PC-3 (cell line): ENCODE measurements at regions of chr12 and their contacts with region 1.

Region 1: DNA sequence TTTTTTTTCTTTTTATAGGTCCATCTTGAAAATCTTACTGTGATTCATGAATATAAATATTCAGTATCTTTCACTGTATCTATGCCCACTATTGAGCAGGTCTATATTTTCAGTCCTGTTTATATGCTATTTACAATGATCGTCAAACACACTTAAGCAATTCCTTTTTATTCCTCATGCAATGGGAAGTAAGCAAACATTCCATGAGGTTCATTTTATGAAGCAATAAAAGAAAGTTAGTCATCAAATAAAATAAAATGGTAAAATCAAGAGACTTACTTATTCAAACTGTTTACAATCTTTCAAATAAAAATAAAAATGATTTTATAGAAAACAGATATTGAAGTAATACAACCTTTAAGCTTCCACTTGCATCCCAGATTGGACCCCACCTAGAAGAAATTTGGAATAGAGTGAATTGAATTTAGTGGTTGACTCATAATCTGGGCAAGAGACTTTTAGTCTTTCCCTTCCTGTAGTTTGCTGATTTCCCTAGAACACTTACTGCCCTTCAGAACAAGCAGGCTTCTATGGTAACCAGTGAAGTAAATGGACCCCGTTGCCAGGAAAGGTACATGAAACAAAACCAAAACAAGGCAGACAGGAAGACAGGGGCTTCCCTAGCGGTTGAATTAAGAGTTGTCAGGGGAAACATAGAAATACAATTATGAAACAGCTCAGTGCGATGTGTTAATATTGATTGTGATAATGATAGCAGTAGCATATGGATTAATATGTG is 241.0 kb upstream of the ATP2B1 start:
- DNase-seq: peak; percentile 94
- ATAC-seq: peak; percentile 63
- H3K4me3 ChIP-seq: peak overlapping the region; percentile 27; the same call in 1 of the 2 replicates
- H3K27ac ChIP-seq: peak overlapping the region; percentile 96
- H3K4me1 ChIP-seq: peaks cover 58% of the 10 kb centered on the region
- H3K27me3 ChIP-seq: no peaks in the 10 kb centered on the region
- CTCF ChIP-seq: peak; percentile 60

Region 2: DNA sequence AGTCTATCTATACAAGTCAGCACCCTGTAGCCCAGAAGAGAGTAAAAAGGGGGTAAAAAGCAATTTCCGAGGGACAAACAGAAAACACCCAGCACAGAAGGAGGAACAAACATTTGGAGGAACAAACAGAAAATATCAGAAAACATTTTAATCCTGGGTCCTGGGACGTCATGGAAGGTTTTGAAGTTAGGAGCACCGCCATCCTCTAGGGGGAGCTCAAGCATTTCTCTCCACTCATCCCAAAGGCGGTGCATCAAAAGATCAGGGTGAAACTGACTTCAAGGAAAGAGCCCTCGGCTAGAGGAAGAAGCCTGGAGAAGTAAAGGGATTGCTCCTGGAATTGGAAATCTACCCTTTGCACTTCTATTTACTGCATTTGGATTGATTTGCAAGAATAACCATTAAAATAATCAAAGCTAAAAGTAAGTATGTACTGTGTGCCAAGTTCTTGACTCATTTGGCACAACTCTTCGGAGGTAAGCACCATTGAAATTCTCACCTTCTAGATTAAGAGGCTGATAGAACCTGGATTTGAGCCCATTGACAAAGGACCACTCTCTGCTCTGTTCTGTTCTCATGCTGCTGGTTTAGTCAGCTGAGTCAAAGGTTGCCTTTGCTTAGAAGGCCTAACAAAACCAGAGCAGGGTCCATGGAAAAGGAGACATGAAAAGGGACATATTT is 406.6 kb before region 1 on chr12:
- CTCF ChIA-PET with region 1: no interaction called
- POLR2A ChIA-PET with region 1: no interaction called
- intact Hi-C with region 1: loop called (anchors 2 kb)
- DNase-seq: peak; percentile 91
- ATAC-seq: peak; percentile 94
- H3K4me3 ChIP-seq: no peak overlapping the region
- H3K27ac ChIP-seq: peak overlapping the region; percentile 7
- H3K4me1 ChIP-seq: peaks cover 6% of the 10 kb centered on the region
- H3K27me3 ChIP-seq: no peaks in the 10 kb centered on the region
- CTCF ChIP-seq: peak; percentile 96

Region 3: GRCh38 chr12:89733579-89734201 is 215.9 kb before region 1 on chr12:
- CTCF ChIA-PET with region 1: no interaction called
- POLR2A ChIA-PET with region 1: no interaction called
- intact Hi-C with region 1: loop called (anchors 1 kb)
- DNase-seq: peak; percentile 93
- ATAC-seq: peak; percentile 74
- H3K4me3 ChIP-seq: peak overlapping the region; percentile 0; the same call in 1 of the 2 replicates
- H3K27ac ChIP-seq: peak overlapping the region; percentile 89
- H3K4me1 ChIP-seq: peaks cover 38% of the 10 kb centered on the region
- H3K27me3 ChIP-seq: no peaks in the 10 kb centered on the region
- CTCF ChIP-seq: no peak

Region 4: GRCh38 chr12:89775063-89775985 is 174.3 kb before region 1 on chr12:
- CTCF ChIA-PET with region 1: no interaction called
- POLR2A ChIA-PET with region 1: no interaction called
- intact Hi-C with region 1: loop called (anchors 2 kb)
- DNase-seq: peak; percentile 91
- ATAC-seq: peak; percentile 48
- H3K4me3 ChIP-seq: no peak overlapping the region
- H3K27ac ChIP-seq: peak overlapping the region; percentile 38
- H3K4me1 ChIP-seq: peaks cover 59% of the 10 kb centered on the region
- H3K27me3 ChIP-seq: no peaks in the 10 kb centered on the region
- CTCF ChIP-seq: no peak

Region 5: GRCh38 chr12:89857652-89858274 is 91.9 kb before region 1 on chr12:
- CTCF ChIA-PET with region 1: no interaction called
- POLR2A ChIA-PET with region 1: no interaction called
- intact Hi-C with region 1: loop called (anchors 2 kb)
- DNase-seq: no peak
- ATAC-seq: no peak
- H3K4me3 ChIP-seq: no peak overlapping the region
- H3K27ac ChIP-seq: no peak overlapping the region
- H3K4me1 ChIP-seq: peaks cover 16% of the 10 kb centered on the region
- H3K27me3 ChIP-seq: no peaks in the 10 kb centered on the region
- CTCF ChIP-seq: no peak

Region 6: GRCh38 chr12:90045559-90045958 is 95.9 kb after region 1 on chr12:
- CTCF ChIA-PET with region 1: no interaction called
- POLR2A ChIA-PET with region 1: no interaction called
- intact Hi-C with region 1: no loop called
- DNase-seq: no peak
- ATAC-seq: no peak
- H3K4me3 ChIP-seq: no peak overlapping the region
- H3K27ac ChIP-seq: no peak overlapping the region
- H3K4me1 ChIP-seq: 0 out of 2 replicates have a peak, but pooled peaks cover 6% of the 10 kb centered on the region
- H3K27me3 ChIP-seq: no peaks in the 10 kb centered on the region
- CTCF ChIP-seq: no peak

Region 7: GRCh38 chr12:90091021-90091651 is 141.5 kb after region 1 on chr12:
- CTCF ChIA-PET with region 1: no interaction called
- POLR2A ChIA-PET with region 1: interaction called, 15 read pairs
- intact Hi-C with region 1: loop called (anchors 2 kb)
- DNase-seq: peak; percentile 98
- ATAC-seq: peak; percentile 95
- H3K4me3 ChIP-seq: peak overlapping the region; percentile 41; the same call in 1 of the 2 replicates
- H3K27ac ChIP-seq: peak overlapping the region; percentile 98
- H3K4me1 ChIP-seq: peaks cover 23% of the 10 kb centered on the region
- H3K27me3 ChIP-seq: no peaks in the 10 kb centered on the region
- CTCF ChIP-seq: no peak